PC-3 (cell line): ENCODE measurements at regions of chr2 and their contacts with region 1.

Region 1: GRCh38 chr2:177212106-177212890 is at the start of gene HNRNPA3:
- DNase-seq: peak; percentile 99
- ATAC-seq: peak; percentile 86
- H3K4me3 ChIP-seq: peak within 1 kb of the TSS; percentile 92
- H3K27ac ChIP-seq: peak within 1 kb of the TSS; percentile 88
- H3K4me1 ChIP-seq: peaks cover 16% of the 10 kb centered on the region
- H3K27me3 ChIP-seq: no peaks in the 10 kb centered on the region
- CTCF ChIP-seq: no peak; the same call in 1 of the 2 replicates
- total RNA-seq, gene HNRNPA3: 50.3 and 90.2 TPM in 2 replicates

Region 2: GRCh38 chr2:177242116-177242987 is 30.1 kb after region 1 on chr2:
- CTCF ChIA-PET with region 1: no interaction called
- POLR2A ChIA-PET with region 1: interaction called, 6 read pairs
- intact Hi-C with region 1: loop called (anchors 2 kb)
- DNase-seq: peak; percentile 92
- ATAC-seq: peak; percentile 85
- H3K4me3 ChIP-seq: peak overlapping the region; percentile 61
- H3K27ac ChIP-seq: peak overlapping the region; percentile 87
- H3K4me1 ChIP-seq: peaks cover 68% of the 10 kb centered on the region
- H3K27me3 ChIP-seq: no peaks in the 10 kb centered on the region
- CTCF ChIP-seq: no peak